Endothelial cell of umbilical vein (primary cell): ENCODE measurements at regions of chr5 and their contacts with region 1.

Region 1: GRCh38 chr5:107476783-107477182 is 194.0 kb downstream of the EFNA5 start:
- DNase-seq: peak; percentile 94
- H3K4me3 ChIP-seq: no peak overlapping the region
- H3K27ac ChIP-seq: peak overlapping the region; percentile 93
- H3K4me1 ChIP-seq: peaks cover 46% of the 10 kb centered on the region
- H3K27me3 ChIP-seq: no peaks in the 10 kb centered on the region
- CTCF ChIP-seq: no peak
- POLR2A ChIP-seq: no peak

Region 2: DNA sequence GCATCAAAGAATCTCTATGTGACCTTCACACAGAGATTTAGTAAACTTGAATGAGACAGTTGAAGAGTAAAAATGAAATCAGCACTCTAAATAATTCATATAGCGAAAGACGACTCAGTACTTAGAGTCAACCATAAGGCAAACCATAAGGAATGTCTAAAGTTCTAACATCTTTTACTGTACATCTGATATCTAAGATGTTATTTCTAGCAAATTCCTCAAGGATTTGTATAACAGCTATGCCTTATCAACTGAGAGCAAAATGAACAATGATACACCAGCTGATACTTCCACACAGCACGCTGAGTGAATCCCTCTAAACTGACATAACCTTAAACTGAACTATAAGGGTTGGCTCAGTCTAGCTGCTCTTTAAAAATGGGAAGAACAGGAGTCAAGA is 566.3 kb before region 1 on chr5:
- CTCF ChIA-PET with region 1: no interaction called
- POLR2A ChIA-PET with region 1: no interaction called
- dilution Hi-C with region 1: no loop called
- intact Hi-C with region 1: no loop called
- DNase-seq: no peak
- H3K4me3 ChIP-seq: no peak overlapping the region
- H3K27ac ChIP-seq: no peak overlapping the region
- H3K4me1 ChIP-seq: no peaks in the 10 kb centered on the region
- H3K27me3 ChIP-seq: no peaks in the 10 kb centered on the region
- CTCF ChIP-seq: no peak
- POLR2A ChIP-seq: no peak

Region 3: DNA sequence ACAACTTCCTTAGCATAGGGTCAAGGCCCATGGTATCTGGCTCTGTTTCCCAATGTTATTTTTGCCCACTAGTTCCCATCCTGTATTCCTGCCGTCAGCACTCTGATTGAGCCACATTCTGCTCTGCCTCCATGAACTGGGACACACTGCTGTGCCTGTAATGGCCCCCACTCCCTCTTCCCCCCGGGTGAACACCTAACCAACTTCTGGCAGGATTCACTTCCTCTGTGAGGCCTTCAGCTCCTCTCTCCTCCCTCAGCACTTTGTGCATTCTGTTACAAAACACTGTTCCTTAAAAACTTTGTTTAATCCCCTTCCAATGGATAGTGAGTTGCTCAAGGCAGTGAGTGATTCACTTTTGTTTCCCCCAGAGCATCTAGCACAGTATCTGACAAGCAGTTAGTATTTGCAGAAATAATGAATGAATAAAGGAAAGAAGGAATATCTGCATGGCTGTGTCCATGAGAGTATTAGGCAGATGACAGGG is 10.3 kb after region 1 on chr5:
- CTCF ChIA-PET with region 1: no interaction called
- POLR2A ChIA-PET with region 1: no interaction called
- dilution Hi-C with region 1: no loop called
- intact Hi-C with region 1: loop called (anchors 1 kb)
- DNase-seq: peak; percentile 62
- H3K4me3 ChIP-seq: no peak overlapping the region
- H3K27ac ChIP-seq: no peak overlapping the region
- H3K4me1 ChIP-seq: peaks cover 12% of the 10 kb centered on the region
- H3K27me3 ChIP-seq: no peaks in the 10 kb centered on the region
- CTCF ChIP-seq: no peak
- POLR2A ChIP-seq: no peak

Region 4: GRCh38 chr5:107542428-107542827 is 65.6 kb after region 1 on chr5:
- CTCF ChIA-PET with region 1: interaction called, 3 read pairs
- POLR2A ChIA-PET with region 1: no interaction called
- dilution Hi-C with region 1: no loop called
- intact Hi-C with region 1: loop called (anchors 2 kb)
- DNase-seq: peak; percentile 98
- H3K4me3 ChIP-seq: peak overlapping the region in 1 of 3 experiments; percentile 55
- H3K27ac ChIP-seq: peak overlapping the region; percentile 96
- H3K4me1 ChIP-seq: peaks cover 29% of the 10 kb centered on the region
- H3K27me3 ChIP-seq: no peaks in the 10 kb centered on the region
- CTCF ChIP-seq: no peak
- POLR2A ChIP-seq: no peak